H1 (cell line): ENCODE measurements at regions of chr10 and their contacts with region 1.

Region 1: GRCh38 chr10:130110246-130111112 is at the start of gene C10orf143:
- DNase-seq: peak; percentile 88 to 100
- H3K4me3 ChIP-seq: peak within 1 kb of the TSS; percentile 63 to 89 (median 80)
- H3K27ac ChIP-seq: peak within 1 kb of the TSS; percentile 81
- H3K4me1 ChIP-seq: peaks cover 0 to 13% (median 2%) of the 10 kb centered on the region in 4 experiments; a peak in 5 of 7 replicates
- H3K27me3 ChIP-seq: no peaks in the 10 kb centered on the region; a peak in 2 of 7 replicates
- CTCF ChIP-seq: no peak
- EP300 ChIP-seq: no peak
- POLR2A ChIP-seq: peak in 1 of 2 experiments; percentile 89; a peak in 2 of 3 replicates
- RAD21 ChIP-seq: no peak
- total RNA-seq, gene C10orf143: 1.3 and 2.0 TPM in 2 replicates

Region 2: DNA sequence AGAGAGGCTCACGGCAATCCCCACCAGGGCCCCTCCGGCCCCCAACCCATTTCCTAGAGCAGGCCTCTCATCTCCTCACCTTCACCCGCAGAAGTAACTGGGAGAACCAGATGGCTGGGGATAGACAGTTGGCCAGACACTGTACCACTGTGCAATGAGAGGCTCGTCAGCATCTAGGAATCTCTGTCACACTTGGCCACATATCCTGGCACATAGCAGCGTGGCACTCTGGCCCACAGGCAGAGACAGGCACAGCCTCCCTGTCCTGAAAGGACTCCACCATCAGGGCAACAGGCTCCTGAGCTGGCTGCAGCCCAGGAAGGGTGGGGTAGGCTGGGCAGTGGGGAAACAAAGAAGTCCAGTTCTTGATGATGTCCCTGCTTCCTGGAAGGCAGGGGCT is 45.7 kb before region 1 on chr10:
- CTCF ChIA-PET with region 1: no interaction called
- POLR2A ChIA-PET with region 1: no interaction called
- DNase-seq: no peak
- H3K4me3 ChIP-seq: no peak overlapping the region
- H3K27ac ChIP-seq: no peak overlapping the region
- H3K4me1 ChIP-seq: no peaks in the 10 kb centered on the region
- H3K27me3 ChIP-seq: no peaks in the 10 kb centered on the region
- CTCF ChIP-seq: no peak
- EP300 ChIP-seq: no peak
- POLR2A ChIP-seq: no peak
- RAD21 ChIP-seq: no peak

Region 3: GRCh38 chr10:130121486-130122079 is 11.1 kb after region 1 on chr10:
- CTCF ChIA-PET with region 1: interaction called, 31 read pairs
- POLR2A ChIA-PET with region 1: interaction called, 15 read pairs
- DNase-seq: no peak
- H3K4me3 ChIP-seq: no peak overlapping the region
- H3K27ac ChIP-seq: no peak overlapping the region
- H3K4me1 ChIP-seq: no peaks in the 10 kb centered on the region
- H3K27me3 ChIP-seq: no peaks in the 10 kb centered on the region
- CTCF ChIP-seq: no peak
- EP300 ChIP-seq: no peak
- POLR2A ChIP-seq: no peak
- RAD21 ChIP-seq: no peak

Region 4: DNA sequence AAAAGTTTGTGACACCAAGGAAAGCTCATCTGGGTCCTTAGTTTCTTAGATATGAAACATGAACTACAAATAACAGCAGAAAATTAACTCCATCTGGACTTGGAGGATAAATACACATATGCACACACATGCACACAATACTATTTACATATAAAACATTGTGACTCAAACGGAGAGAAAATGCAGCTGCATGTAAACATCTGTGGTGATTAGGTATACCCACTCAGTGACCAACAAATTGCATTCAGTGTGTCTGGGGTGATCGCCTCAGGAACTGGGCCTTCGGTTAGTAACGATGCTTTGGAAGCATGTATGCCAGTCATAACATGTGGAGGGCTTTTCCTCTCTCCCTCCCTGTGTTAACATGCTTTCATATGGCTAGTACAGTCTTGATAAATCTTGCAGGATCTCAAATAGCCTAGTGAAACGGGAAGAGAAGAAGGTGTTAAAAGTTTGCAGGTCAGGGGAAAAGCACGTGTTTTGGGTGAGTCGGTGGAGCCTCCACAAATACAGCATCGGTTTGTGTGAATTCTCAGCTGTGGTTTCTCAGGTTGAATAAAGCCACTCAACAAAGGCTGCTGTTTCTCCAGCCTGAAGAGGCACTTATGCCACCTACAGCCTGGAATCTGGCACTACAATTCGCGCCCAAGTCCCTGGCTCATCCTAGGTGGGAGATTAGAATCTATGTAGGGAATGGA is 17.0 kb after region 1 on chr10:
- CTCF ChIA-PET with region 1: interaction called, 31 read pairs
- POLR2A ChIA-PET with region 1: interaction called, 15 read pairs
- DNase-seq: peak in 1 of 2 experiments; percentile 79
- H3K4me3 ChIP-seq: no peak overlapping the region
- H3K27ac ChIP-seq: no peak overlapping the region
- H3K4me1 ChIP-seq: peaks cover 2 to 4% (median 3%) of the 10 kb centered on the region in 4 experiments; a peak in 4 of 7 replicates
- H3K27me3 ChIP-seq: peaks cover 0 to 4% (median 2%) of the 10 kb centered on the region in 4 experiments; a peak in 1 of 7 replicates
- CTCF ChIP-seq: peak; percentile 73 to 90 (median 77)
- EP300 ChIP-seq: no peak
- POLR2A ChIP-seq: no peak
- RAD21 ChIP-seq: peak; percentile 65 to 74

Region 5: DNA sequence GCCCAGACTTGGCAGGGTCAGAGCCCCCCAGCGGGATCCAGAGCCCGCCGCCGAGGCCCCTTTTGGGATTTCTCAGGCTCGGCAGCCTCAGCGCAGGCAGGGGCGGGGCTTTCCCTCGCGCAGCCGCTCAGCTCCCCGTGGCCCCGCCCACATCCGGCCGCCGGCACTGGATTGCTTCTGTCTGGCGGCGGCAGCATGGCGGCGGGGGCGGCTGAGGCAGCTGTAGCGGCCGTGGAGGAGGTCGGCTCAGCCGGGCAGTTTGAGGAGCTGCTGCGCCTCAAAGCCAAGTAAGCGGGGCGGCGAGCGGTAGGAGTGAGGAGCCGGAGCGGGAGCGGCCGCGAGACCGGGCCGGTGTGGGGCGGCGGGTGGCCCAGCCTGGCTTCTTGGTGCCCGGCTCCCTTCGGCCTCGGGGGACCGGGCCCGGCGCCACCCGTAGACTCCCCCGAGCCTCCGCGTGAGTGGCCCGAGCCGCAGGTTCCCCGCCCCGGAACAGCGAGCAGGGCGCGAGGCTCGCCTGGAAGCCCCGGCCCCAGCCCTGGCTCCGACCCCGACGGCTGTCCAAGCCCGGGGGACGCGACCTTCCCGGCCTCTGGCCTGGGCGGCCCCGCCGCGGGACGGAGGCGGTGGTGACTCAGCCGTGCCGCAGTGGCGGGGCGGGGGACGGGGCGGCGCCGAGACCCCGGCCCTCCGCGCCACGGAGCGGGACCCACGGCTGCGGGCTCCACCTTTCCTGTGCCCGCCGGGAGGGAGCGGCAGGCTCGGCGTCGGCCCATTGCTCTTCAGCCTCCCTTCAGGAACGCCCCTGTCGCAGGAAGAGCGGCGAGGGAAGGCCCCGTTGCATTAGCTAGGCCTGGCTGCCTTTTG is 26.0 kb after region 1 on chr10 and contains the start of gene GLRX3:
- CTCF ChIA-PET with region 1: interaction called, 23 read pairs
- POLR2A ChIA-PET with region 1: interaction called, 28 read pairs
- DNase-seq: peak; percentile 27 to 91
- H3K4me3 ChIP-seq: peak within 1 kb of the TSS; percentile 83 to 96 (median 84)
- H3K27ac ChIP-seq: peak within 1 kb of the TSS; percentile 31; the same call in 1 of the 2 replicates
- H3K4me1 ChIP-seq: peaks cover 0 to 7% (median 4%) of the 10 kb centered on the region in 4 experiments; a peak in 3 of 7 replicates
- H3K27me3 ChIP-seq: 0 out of 7 replicates have a peak, but pooled peaks cover 0 to 4% (median 0%) of the 10 kb centered on the region in 4 experiments
- CTCF ChIP-seq: no peak
- EP300 ChIP-seq: no peak
- POLR2A ChIP-seq: peak; percentile 60 to 70; a peak in 2 of 3 replicates
- RAD21 ChIP-seq: no peak
- total RNA-seq, gene GLRX3: 155 and 157 TPM in 2 replicates